ENCODE measurements at regions of chr2 and their contacts with region 1.

Region 1: GRCh38 chr2:107936433-107937359 is 49.6 kb upstream of the SLC5A7 start:
- DNase-seq: no peak
- ATAC-seq: no peak
- H3K4me3 ChIP-seq: no peak overlapping the region
- H3K27ac ChIP-seq: no peak overlapping the region
- H3K4me1 ChIP-seq: no peaks in the 10 kb centered on the region
- H3K27me3 ChIP-seq: no peaks in the 10 kb centered on the region
- CTCF ChIP-seq: peak; percentile 50
- POLR2A ChIP-seq: no peak
- RAD21 ChIP-seq: peak; percentile 38

Region 2: DNA sequence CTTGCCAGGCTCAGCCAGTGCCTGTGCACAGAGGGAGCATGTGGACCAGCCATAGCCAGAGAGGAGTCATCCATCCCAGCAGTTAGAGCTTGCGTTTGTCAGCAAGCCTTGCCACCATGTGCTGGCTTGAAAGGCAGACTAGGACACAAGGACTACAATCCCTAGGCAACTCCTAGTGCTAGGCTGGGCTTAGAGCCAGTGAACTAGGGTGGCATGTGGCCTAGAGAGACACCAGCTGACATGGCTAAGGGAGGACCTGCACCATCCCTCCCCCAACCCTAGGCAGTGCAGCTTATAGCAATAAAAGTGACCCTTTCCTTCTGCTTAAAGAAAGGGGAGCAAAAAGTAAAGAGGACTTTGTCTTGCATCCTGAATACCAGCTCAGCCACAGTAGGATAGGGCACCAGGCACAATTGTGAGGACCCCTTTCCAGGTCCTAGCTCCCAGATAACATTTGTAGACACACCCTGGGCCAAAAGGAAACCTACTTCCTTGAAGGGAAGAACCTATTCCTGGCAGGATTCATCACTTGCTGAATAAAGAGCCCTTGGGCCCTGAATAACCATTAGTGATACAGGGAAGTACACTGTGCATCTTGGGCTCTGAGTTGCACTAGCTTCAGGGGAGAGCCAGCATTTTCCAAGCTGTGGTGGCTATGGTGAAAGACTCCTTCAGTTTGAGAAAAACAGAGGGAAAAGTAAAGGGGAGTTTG is 1703.9 kb before region 1 on chr2:
- CTCF ChIA-PET with region 1: no interaction called
- POLR2A ChIA-PET with region 1: no interaction called
- dilution Hi-C with region 1: no loop called
- in situ Hi-C with region 1: loop called (anchors 25 kb)
- intact Hi-C with region 1: no loop called
- DNase-seq: no peak
- ATAC-seq: no peak
- H3K4me3 ChIP-seq: no peak overlapping the region
- H3K27ac ChIP-seq: no peak overlapping the region
- H3K4me1 ChIP-seq: no peaks in the 10 kb centered on the region
- H3K27me3 ChIP-seq: no peaks in the 10 kb centered on the region
- CTCF ChIP-seq: no peak
- POLR2A ChIP-seq: no peak
- RAD21 ChIP-seq: no peak